Activated CD4-positive, alpha-beta T cell treated with anti-CD3 and anti-CD28 coated beads, Interleukin-2, amount 10 ng/mL, durations not matched to agents 24 days and 14 days (primary cell): ENCODE measurements at regions of chr5 and their contacts with region 1.

Region 1: GRCh38 chr5:41754857-41755256 is 115.4 kb downstream of the OXCT1 start:
- DNase-seq: no peak
- H3K4me3 Mint-ChIP-seq: no peak overlapping the region
- H3K27ac Mint-ChIP-seq: no peak overlapping the region
- H3K4me1 Mint-ChIP-seq: peaks cover 21% of the 10 kb centered on the region
- H3K27me3 Mint-ChIP-seq: no peaks in the 10 kb centered on the region

Region 2: DNA sequence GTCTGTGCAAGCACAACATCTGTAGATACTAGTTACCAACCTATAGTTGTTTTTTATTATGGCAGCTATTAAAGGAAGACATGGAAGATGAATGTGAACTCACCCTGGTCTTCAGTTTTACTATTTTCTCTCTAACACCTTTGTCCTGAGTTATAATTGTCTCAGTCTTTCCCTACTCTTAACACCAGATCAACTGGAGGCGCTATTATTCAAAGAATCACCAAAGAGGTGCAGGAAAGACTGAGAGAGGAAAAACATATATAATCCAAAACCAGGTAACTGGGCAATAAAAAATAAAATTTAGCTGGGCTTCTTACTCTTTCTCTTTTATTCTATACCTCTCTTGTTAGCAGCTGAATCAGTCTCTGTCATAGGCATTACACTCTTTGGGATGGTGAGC is 407.3 kb before region 1 on chr5:
- intact Hi-C with region 1: no loop called
- DNase-seq: no peak
- H3K4me3 Mint-ChIP-seq: no peak overlapping the region
- H3K27ac Mint-ChIP-seq: no peak overlapping the region
- H3K4me1 Mint-ChIP-seq: no peaks in the 10 kb centered on the region
- H3K27me3 Mint-ChIP-seq: no peaks in the 10 kb centered on the region

Region 3: GRCh38 chr5:41796061-41796460 is 41.2 kb after region 1 on chr5:
- intact Hi-C with region 1: loop called (anchors 5 kb)
- DNase-seq: no peak
- H3K4me3 Mint-ChIP-seq: no peak overlapping the region
- H3K27ac Mint-ChIP-seq: no peak overlapping the region
- H3K4me1 Mint-ChIP-seq: peaks cover 9% of the 10 kb centered on the region
- H3K27me3 Mint-ChIP-seq: no peaks in the 10 kb centered on the region